Ascending aorta (tissue), 2 donors: ENCODE measurements at regions of chr6 and their contacts with region 1.

Region 1: GRCh38 chr6:139375232-139376016 is 976 bp upstream of the CITED2 start:
- DNase-seq: peak; percentile 46 to 91
- H3K4me3 ChIP-seq: peak overlapping the region; percentile 69 to 75
- H3K27ac ChIP-seq: peak overlapping the region; percentile 92 to 93
- H3K4me1 ChIP-seq: peaks cover 0 to 13% of the 10 kb centered on the region in 2 donors
- H3K27me3 ChIP-seq: no peaks in the 10 kb centered on the region
- CTCF ChIP-seq: peak in 1 of 3 experiments; percentile 20

Region 2: DNA sequence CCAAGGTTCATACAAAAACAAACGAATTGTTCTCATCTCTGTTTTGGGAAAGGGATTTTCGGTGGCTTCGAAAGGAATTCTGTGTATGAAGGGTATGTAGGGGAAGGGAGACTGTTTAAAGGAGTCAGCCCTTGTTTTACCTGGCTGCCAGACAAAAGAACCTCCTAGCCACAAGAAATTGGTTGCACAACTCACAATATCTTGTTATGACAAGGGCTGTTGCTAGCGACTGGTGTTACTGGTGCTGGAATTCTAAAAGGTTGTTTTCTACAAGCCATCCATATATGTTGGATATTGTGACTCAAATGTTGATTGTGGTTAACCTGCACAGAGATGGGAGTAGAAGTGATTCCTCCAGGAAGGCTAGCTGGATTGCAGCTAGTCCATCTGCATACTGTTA is 33.6 kb after region 1 on chr6:
- intact Hi-C with region 1: no loop called
- DNase-seq: no peak
- H3K4me3 ChIP-seq: no peak overlapping the region
- H3K27ac ChIP-seq: no peak overlapping the region
- H3K4me1 ChIP-seq: peaks cover 0 to 8% of the 10 kb centered on the region in 2 donors
- H3K27me3 ChIP-seq: no peaks in the 10 kb centered on the region
- CTCF ChIP-seq: no peak

Region 3: GRCh38 chr6:139540276-139540675 is 164.9 kb after region 1 on chr6:
- intact Hi-C with region 1: loop called (anchors 2 kb)
- DNase-seq: peak in 1 of 2 donors; percentile 69
- H3K4me3 ChIP-seq: no peak overlapping the region
- H3K27ac ChIP-seq: peak overlapping the region; percentile 68 to 69
- H3K4me1 ChIP-seq: peaks cover 0 to 14% of the 10 kb centered on the region in 2 donors
- H3K27me3 ChIP-seq: no peaks in the 10 kb centered on the region
- CTCF ChIP-seq: no peak

Region 4: GRCh38 chr6:139743664-139744437 is 368.4 kb after region 1 on chr6:
- intact Hi-C with region 1: loop called (anchors 5 kb)
- DNase-seq: no peak
- H3K4me3 ChIP-seq: no peak overlapping the region
- H3K27ac ChIP-seq: peak overlapping the region in 1 of 2 donors; percentile 7
- H3K4me1 ChIP-seq: peaks cover 0 to 10% of the 10 kb centered on the region in 2 donors
- H3K27me3 ChIP-seq: no peaks in the 10 kb centered on the region
- CTCF ChIP-seq: no peak

Region 5: GRCh38 chr6:139940741-139941729 is 565.6 kb after region 1 on chr6:
- intact Hi-C with region 1: loop called (anchors 5 kb)
- DNase-seq: no peak
- H3K4me3 ChIP-seq: peak overlapping the region; percentile 31 to 32
- H3K27ac ChIP-seq: peak overlapping the region; percentile 46 to 56
- H3K4me1 ChIP-seq: peaks cover 2 to 25% of the 10 kb centered on the region in 2 donors
- H3K27me3 ChIP-seq: no peaks in the 10 kb centered on the region
- CTCF ChIP-seq: no peak

Region 6: DNA sequence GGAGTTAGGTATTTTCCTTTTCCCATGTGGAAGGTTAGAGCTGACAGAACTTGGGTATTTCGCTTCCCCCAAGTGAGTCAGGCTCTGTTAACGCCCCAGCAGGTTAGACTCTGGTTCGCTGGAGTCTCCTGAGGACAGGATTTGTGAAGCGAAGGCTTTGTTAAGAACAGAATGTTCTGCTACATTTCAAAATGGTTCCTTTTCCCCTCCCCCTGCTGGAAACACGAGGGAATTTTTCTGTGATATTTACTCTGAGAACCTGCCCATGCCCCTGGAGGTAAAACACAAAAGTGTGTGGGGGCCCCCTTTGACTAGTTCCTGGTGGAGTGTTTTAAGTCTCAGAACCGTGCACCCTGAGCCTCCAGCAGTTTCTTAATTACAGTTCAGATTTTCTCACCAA is 730.4 kb after region 1 on chr6:
- intact Hi-C with region 1: loop called (anchors 10 kb)
- DNase-seq: no peak
- H3K4me3 ChIP-seq: no peak overlapping the region
- H3K27ac ChIP-seq: peak overlapping the region; percentile 57 to 58
- H3K4me1 ChIP-seq: peaks cover 0 to 6% of the 10 kb centered on the region in 2 donors
- H3K27me3 ChIP-seq: no peaks in the 10 kb centered on the region
- CTCF ChIP-seq: peak in 1 of 3 experiments; percentile 35

Region 7: DNA sequence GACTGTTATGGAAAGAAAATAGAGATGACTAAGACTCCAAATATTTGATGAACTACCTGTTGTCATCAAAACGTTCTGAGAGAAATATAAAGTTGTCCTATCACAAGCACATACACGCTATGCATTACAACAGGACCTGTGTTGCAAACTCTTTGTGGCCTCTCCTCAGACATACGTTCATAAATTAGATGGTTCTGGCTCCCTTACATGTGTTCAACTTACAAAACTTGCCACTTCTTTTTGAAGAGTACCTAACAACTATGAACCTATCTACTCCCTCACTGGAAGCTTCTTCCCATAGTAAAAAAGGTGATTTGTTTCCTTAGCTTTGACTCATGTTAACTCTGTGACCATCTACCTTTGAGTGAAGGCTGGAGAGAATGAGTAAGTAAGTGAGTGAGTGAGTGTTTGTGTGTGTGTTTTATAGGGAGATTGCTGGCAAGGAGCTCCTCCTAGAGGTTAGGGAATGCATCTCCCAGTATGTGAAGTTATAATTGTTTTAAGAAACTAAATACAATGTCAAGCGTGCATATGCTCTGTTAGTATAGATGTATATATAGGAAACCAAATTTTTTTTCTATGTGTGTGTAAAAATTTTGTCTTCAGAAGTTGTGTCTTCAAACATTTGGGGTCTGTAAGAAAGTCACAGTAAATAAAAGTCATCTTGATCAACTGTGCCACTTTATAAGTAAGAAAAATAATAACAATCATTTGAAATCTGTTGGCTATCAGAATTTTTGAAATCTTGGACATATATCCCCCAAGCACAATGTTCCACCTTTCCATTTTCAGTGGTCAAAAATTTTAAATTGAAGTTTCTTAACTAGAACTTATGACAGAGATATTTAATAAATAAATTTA is 1546.2 kb after region 1 on chr6:
- intact Hi-C with region 1: loop called (anchors 10 kb)
- DNase-seq: no peak
- H3K4me3 ChIP-seq: no peak overlapping the region
- H3K27ac ChIP-seq: no peak overlapping the region
- H3K4me1 ChIP-seq: no peaks in the 10 kb centered on the region
- H3K27me3 ChIP-seq: no peaks in the 10 kb centered on the region
- CTCF ChIP-seq: peak in 2 of 3 experiments; percentile 55 to 58